ENCODE measurements at regions of chr11 and their contacts with region 1.

Region 1: GRCh38 chr11:61446211-61446651 is 16.3 kb downstream of the SDHAF2 start:
- H3K4me3 ChIP-seq: no peak overlapping the region
- H3K27ac ChIP-seq: no peak overlapping the region
- H3K4me1 ChIP-seq: no peaks in the 10 kb centered on the region
- CTCF ChIP-seq: peak; percentile 77

Region 2: GRCh38 chr11:61429691-61430582 is 16.3 kb before region 1 on chr11 and contains the starts of genes CPSF7 and SDHAF2:
- CTCF ChIA-PET with region 1: interaction called, 67 read pairs
- POLR2A ChIA-PET with region 1: interaction called, 7 read pairs
- H3K4me3 ChIP-seq: peak within 1 kb of the TSS; percentile 99
- H3K27ac ChIP-seq: peak within 1 kb of the TSS; percentile 99
- H3K4me1 ChIP-seq: no peaks in the 10 kb centered on the region
- CTCF ChIP-seq: peak; percentile 49

Region 3: DNA sequence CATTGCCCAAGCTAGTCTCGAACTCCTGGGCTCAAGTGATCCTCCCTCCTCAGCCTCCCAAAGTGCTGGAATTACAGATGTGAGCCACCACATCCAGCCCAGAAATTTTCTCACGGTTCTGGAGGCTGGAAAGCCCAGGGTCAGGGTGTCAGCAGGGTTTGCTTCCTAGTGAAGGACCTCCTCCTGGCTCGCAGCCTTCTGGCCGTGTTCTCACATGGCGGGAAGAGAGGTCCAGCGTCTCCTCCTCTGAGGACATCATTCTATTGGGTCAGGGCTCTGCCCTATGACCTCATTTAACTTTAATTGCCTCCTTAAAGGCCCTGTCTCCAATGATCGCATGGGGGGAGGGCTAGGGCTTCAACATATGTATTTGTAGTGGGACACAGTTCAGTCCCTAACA is 21.8 kb after region 1 on chr11:
- CTCF ChIA-PET with region 1: interaction called, 19 read pairs
- POLR2A ChIA-PET with region 1: no interaction called
- H3K4me3 ChIP-seq: no peak overlapping the region
- H3K27ac ChIP-seq: no peak overlapping the region
- H3K4me1 ChIP-seq: no peaks in the 10 kb centered on the region
- CTCF ChIP-seq: no peak

Region 4: DNA sequence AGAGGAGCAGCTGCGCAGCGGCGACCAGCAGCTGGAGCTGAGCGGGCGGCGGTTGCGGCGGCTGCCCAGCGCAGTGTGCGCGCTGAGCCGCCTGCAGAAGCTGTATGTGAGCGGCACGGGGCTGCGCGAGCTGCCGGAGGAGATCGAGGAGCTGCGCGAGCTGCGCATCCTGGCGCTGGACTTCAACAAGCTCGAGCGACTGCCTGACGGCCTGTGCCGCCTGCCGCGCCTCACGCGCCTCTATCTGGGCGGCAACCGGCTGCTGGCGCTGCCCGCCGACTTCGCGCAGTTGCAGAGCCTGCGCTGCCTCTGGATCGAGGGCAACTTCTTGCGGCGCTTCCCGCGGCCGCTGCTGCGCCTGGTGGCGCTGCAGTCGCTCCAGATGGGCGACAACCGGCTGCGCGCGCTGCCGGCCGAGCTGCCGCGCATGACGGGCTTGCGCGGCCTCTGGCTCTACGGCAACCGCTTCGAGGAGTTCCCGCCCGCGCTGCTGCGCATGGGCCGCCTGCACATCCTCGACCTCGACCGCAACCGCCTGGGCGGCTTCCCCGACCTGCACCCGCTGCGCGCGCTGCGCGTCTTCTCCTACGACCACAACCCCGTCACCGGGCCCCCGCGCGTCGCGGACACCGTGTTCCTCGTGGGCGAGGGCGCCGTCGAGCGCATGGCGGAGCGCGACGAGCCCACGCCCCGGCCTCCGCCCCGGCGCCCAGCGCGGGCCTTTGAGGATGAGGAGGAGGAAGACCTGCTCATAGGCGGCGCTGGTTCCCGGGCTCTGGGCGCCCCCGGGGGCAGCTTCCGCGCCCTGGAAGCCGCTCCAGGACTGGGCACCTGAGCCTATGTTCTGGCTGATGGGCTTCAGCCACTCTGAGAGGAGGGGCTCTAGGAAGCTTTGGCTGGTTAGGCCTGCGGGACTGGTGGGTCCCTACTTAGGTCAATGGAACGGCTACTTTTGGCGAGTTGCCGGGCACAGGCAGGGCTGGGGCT is 63.1 kb after region 1 on chr11:
- CTCF ChIA-PET with region 1: interaction called, 118 read pairs
- POLR2A ChIA-PET with region 1: no interaction called
- H3K4me3 ChIP-seq: peak overlapping the region; percentile 26
- H3K27ac ChIP-seq: no peak overlapping the region
- H3K4me1 ChIP-seq: no peaks in the 10 kb centered on the region
- CTCF ChIP-seq: peak; percentile 83

Region 5: GRCh38 chr11:61532139-61533038 is 86.2 kb after region 1 on chr11:
- CTCF ChIA-PET with region 1: interaction called, 20 read pairs
- POLR2A ChIA-PET with region 1: no interaction called
- H3K4me3 ChIP-seq: no peak overlapping the region
- H3K27ac ChIP-seq: no peak overlapping the region
- H3K4me1 ChIP-seq: no peaks in the 10 kb centered on the region
- CTCF ChIP-seq: peak; percentile 45; the same call in 1 of the 2 replicates

Region 6: GRCh38 chr11:61627567-61628445 is 181.6 kb after region 1 on chr11:
- CTCF ChIA-PET with region 1: interaction called, 41 read pairs
- POLR2A ChIA-PET with region 1: no interaction called
- H3K4me3 ChIP-seq: no peak overlapping the region
- H3K27ac ChIP-seq: no peak overlapping the region
- H3K4me1 ChIP-seq: no peaks in the 10 kb centered on the region
- CTCF ChIP-seq: 0 out of 2 replicates have a peak, but pooled peaks have one; percentile 31

Measured in HEK293 (cell line).